Calu3 (cell line): ENCODE measurements at regions of chr1 and their contacts with region 1.

Region 1: DNA sequence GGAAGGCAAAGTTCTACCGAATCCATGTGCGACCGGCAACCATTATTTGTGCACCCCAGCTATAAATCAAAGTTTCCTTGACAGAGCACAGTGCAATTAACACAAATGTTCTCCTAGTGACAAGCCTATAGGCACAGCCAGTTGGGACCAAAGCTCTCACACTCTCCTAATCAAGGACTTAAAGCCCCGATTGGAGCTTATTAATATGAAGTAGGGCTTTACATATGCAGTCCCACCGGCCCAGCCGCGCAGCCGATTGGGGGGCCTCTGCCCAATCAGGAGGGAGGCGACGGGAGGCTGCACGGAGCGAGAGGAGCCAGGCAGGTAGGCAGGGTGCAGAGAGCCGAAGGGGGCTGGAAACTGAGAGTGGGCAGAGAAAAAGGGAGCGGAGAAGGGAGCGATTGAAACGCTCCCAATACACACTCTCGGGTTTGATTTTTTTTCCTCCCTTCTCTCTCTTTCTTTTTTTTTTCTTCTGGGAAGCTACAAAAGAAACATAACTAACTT is at the start of gene ESRRG:
- DNase-seq: peak; percentile 75
- H3K4me3 Mint-ChIP-seq: peak within 1 kb of the TSS; percentile 88
- H3K27ac Mint-ChIP-seq: peak within 1 kb of the TSS; percentile 10
- H3K4me1 Mint-ChIP-seq: peaks cover 19% of the 10 kb centered on the region
- H3K27me3 Mint-ChIP-seq: no peaks in the 10 kb centered on the region
- CTCF ChIP-seq: no peak
- total RNA-seq, gene ESRRG: 0.76 and 1.3 TPM in 2 replicates

Region 2: GRCh38 chr1:216293683-216294082 is 429.6 kb before region 1 on chr1:
- CTCF ChIA-PET with region 1: no interaction called
- intact Hi-C with region 1: loop called (anchors 1 kb)
- DNase-seq: no peak
- H3K4me3 Mint-ChIP-seq: no peak overlapping the region
- H3K27ac Mint-ChIP-seq: no peak overlapping the region
- H3K4me1 Mint-ChIP-seq: no peaks in the 10 kb centered on the region
- H3K27me3 Mint-ChIP-seq: no peaks in the 10 kb centered on the region
- CTCF ChIP-seq: no peak

Region 3: DNA sequence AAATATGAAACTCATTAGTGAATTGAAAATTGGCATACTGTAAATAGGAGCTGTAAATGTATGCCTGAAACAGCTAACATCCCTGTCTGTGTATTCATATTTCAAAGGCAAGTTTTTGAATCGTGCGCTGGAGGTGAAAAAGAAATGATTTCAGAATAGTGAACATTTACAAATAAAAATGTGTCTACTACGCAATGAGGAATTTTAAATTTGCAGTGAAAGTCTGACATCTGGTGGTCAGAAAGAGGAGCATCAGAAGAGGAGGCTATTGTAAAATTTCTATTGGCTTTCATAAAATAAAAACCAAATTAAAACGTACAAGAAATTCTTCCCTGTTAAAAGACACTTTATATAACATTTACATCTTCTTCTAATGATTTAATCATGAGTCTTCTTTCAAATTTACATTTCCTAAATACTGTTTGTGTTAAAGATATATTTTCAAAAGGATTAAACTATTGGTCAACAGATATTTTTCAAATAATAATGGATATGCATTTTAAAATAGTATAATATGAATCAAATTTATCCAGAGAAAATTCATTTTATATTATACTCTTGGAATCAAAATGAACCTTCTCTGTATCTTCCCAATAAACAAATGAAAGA is 1448.1 kb after region 1 on chr1:
- CTCF ChIA-PET with region 1: no interaction called
- intact Hi-C with region 1: loop called (anchors 10 kb)
- DNase-seq: no peak
- H3K4me3 Mint-ChIP-seq: no peak overlapping the region
- H3K27ac Mint-ChIP-seq: no peak overlapping the region
- H3K4me1 Mint-ChIP-seq: peaks cover under 1% of the 10 kb centered on the region
- H3K27me3 Mint-ChIP-seq: peaks cover 7% of the 10 kb centered on the region
- CTCF ChIP-seq: peak; percentile 65